ENCODE measurements at regions of chr3 and their contacts with region 1.

Region 1: DNA sequence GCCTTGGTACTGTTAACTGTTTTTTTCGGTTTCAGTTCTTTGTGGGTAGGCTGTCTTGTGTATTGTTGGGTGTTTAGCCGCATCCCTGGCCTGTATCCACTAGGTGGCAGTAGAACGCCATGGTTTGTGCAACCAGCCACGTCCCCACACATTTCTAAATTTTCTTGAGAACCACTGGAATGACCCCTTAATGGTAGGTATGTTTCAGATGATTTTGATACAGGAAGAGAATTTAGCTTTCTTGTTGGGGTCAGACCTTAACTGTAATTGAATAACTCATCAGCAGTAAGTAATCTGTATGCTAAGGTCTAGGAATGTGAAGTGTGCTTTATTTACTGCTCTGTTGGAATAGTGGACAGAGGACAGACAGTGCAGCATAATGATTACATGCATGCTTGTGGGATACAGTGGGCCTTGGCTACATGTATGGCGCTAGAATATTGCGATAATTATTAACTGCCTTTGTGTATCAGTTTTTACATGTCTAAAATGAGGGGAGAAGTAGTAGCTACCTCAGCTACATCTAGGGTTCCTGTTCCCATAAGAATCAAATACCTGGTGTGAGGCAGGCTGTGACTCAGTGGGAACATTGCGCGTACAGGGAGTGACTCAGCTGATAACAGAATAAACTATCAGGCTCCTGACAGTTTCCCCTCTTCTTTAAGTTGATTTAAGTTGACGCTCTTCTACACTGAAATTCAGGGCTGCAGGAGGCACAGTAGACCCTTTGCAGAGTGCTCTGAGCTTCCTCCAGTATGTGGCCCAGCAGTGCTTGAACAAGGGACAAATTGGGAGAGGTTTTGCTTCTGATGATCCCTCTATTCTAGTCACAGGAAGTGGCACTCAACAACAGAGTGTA is 25.0 kb upstream of the GPR171 start:
- DNase-seq: peak; percentile 90
- H3K4me3 Mint-ChIP-seq: no peak overlapping the region
- H3K27ac Mint-ChIP-seq: peak overlapping the region; percentile 62
- H3K4me1 Mint-ChIP-seq: peaks cover 62% of the 10 kb centered on the region
- H3K27me3 Mint-ChIP-seq: no peaks in the 10 kb centered on the region

Region 2: DNA sequence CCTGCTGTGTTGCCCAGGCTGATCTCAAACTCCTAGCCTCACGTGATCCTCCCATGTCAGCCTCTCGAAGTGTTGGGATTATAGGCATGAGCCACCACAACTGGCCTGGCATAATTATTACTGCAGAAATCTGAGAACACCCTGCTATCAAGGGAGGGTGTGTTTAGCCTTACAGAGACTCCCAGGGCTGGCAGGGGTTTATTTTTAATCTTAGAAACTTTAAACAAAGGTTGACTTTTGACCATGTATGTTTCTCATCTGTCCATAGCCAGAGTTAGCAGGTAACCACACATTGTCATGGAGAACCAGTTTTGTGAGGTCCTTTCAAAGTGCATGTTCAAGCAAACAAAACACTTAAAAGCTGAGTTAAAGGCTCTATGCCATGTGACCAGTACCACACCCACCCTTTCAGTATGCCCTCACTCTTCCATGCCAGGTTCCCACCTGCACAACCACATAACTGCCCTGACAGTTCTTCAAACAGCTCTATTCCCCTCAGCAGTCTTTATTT is 476.2 kb before region 1 on chr3:
- CTCF ChIA-PET with region 1: no interaction called
- intact Hi-C with region 1: no loop called
- DNase-seq: no peak
- H3K4me3 Mint-ChIP-seq: no peak overlapping the region
- H3K27ac Mint-ChIP-seq: peak overlapping the region; percentile 56
- H3K4me1 Mint-ChIP-seq: peaks cover 84% of the 10 kb centered on the region
- H3K27me3 Mint-ChIP-seq: no peaks in the 10 kb centered on the region

Region 3: DNA sequence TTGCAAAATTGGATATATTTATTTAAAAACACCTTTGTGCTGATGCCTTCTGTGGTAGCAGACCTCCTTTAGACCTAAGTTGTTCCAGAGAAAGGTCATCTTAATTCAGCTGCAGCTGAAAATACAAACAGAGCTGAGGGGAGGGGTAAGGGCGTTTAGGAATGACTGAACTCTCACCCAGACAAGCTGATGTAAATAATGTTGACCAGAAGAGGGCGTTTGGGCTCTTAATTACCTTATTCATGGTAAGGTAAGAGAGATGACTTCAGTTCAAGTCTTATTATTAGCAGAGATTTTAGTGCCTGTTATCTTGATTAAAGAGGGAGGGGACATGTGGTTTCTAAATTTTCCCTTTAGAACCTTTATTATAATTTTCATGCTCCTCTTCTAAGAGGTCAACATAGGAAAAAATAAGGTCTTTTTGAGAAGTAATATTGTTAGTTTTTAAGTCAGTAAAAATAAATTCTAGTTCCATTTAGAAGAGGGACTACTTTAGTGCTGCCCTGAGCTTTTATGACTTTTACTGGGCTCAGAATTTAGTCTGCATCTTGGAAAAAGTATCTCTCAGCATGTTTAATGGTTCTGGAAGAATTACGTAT is 71.3 kb before region 1 on chr3:
- CTCF ChIA-PET with region 1: interaction called, 14 read pairs
- intact Hi-C with region 1: no loop called
- DNase-seq: peak; percentile 61
- H3K4me3 Mint-ChIP-seq: no peak overlapping the region
- H3K27ac Mint-ChIP-seq: no peak overlapping the region
- H3K4me1 Mint-ChIP-seq: no peaks in the 10 kb centered on the region
- H3K27me3 Mint-ChIP-seq: no peaks in the 10 kb centered on the region

Region 4: GRCh38 chr3:151191095-151191494 is 36.9 kb before region 1 on chr3:
- CTCF ChIA-PET with region 1: interaction called, 9 read pairs
- intact Hi-C with region 1: loop called (anchors 1 kb)
- DNase-seq: no peak
- H3K4me3 Mint-ChIP-seq: peak overlapping the region; percentile 41
- H3K27ac Mint-ChIP-seq: peak overlapping the region; percentile 93
- H3K4me1 Mint-ChIP-seq: peaks cover 68% of the 10 kb centered on the region
- H3K27me3 Mint-ChIP-seq: no peaks in the 10 kb centered on the region

Region 5: DNA sequence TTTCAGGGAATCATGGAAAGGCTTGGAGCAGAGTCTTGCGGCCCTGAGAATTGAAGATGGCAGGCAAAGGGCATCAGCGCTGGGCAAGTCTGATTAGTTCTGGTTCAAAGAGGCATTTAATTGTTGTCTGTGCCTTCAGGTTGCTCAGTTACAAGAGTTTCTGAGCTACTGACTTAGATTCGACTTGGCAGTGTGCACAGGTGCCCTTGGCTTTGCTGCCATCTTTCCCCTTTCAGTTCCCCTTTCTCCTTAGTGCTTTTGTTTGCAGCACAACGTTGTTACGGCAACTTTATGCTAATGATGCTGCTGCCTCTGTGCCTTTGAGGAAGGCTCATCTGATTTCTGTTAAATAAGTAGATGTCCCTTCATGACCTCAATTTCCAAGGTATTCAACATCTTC is 37.8 kb after region 1 on chr3:
- CTCF ChIA-PET with region 1: interaction called, 11 read pairs
- intact Hi-C with region 1: no loop called
- DNase-seq: no peak
- H3K4me3 Mint-ChIP-seq: no peak overlapping the region
- H3K27ac Mint-ChIP-seq: no peak overlapping the region
- H3K4me1 Mint-ChIP-seq: peaks cover 17% of the 10 kb centered on the region
- H3K27me3 Mint-ChIP-seq: no peaks in the 10 kb centered on the region

Region 6: GRCh38 chr3:151290673-151291072 is 62.6 kb after region 1 on chr3:
- CTCF ChIA-PET with region 1: interaction called, 39 read pairs
- intact Hi-C with region 1: no loop called
- DNase-seq: no peak
- H3K4me3 Mint-ChIP-seq: no peak overlapping the region
- H3K27ac Mint-ChIP-seq: no peak overlapping the region
- H3K4me1 Mint-ChIP-seq: peaks cover 2% of the 10 kb centered on the region
- H3K27me3 Mint-ChIP-seq: peaks cover 2% of the 10 kb centered on the region

Region 7: GRCh38 chr3:151439652-151440129 is 211.7 kb after region 1 on chr3:
- CTCF ChIA-PET with region 1: interaction called, 4 read pairs
- intact Hi-C with region 1: loop called (anchors 2 kb)
- DNase-seq: no peak
- H3K4me3 Mint-ChIP-seq: no peak overlapping the region
- H3K27ac Mint-ChIP-seq: no peak overlapping the region
- H3K4me1 Mint-ChIP-seq: no peaks in the 10 kb centered on the region
- H3K27me3 Mint-ChIP-seq: peaks cover 2% of the 10 kb centered on the region

Region 8: GRCh38 chr3:151838583-151839312 is 610.7 kb after region 1 on chr3:
- CTCF ChIA-PET with region 1: interaction called, 10 read pairs
- intact Hi-C with region 1: loop called (anchors 1 kb)
- DNase-seq: peak; percentile 53
- H3K4me3 Mint-ChIP-seq: no peak overlapping the region
- H3K27ac Mint-ChIP-seq: no peak overlapping the region
- H3K4me1 Mint-ChIP-seq: peaks cover 2% of the 10 kb centered on the region
- H3K27me3 Mint-ChIP-seq: no peaks in the 10 kb centered on the region

Measured in activated naive CD4-positive, alpha-beta T cell treated with anti-CD3 and anti-CD28 coated beads for 36 hours (primary cell).